ENCODE measurements at regions of chr16 and their contacts with region 1.

Region 1: GRCh38 chr16:13453938-13454553 is 465.9 kb upstream of the ERCC4 start:
- DNase-seq: peak; percentile 54
- H3K4me3 Mint-ChIP-seq: no peak overlapping the region
- H3K27ac Mint-ChIP-seq: no peak overlapping the region
- H3K4me1 Mint-ChIP-seq: no peaks in the 10 kb centered on the region
- H3K27me3 Mint-ChIP-seq: peaks cover 5% of the 10 kb centered on the region

Region 2: GRCh38 chr16:12228602-12229499 is 1225.2 kb before region 1 on chr16:
- CTCF ChIA-PET with region 1: no interaction called
- intact Hi-C with region 1: loop called (anchors 10 kb)
- DNase-seq: peak; percentile 56
- H3K4me3 Mint-ChIP-seq: no peak overlapping the region
- H3K27ac Mint-ChIP-seq: no peak overlapping the region
- H3K4me1 Mint-ChIP-seq: peaks cover 19% of the 10 kb centered on the region
- H3K27me3 Mint-ChIP-seq: no peaks in the 10 kb centered on the region

Region 3: DNA sequence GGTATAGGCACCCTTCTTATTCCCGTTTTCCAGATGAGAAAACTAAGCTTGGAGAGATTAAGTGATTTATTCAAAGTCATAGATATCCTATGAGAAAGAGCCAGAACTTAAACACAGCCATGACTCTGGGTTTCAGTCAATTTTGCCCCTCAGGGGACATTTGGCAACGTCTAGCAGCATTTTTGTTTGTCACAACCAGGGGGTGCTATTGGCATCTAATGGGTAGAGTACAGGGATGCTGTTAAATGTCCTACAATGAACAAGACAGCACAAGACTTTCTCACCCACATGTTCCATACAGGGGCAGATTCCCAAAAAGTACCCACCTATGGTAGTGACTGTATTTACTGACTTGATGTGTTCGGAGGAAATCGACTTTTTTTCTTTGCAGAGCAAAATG is 557.5 kb before region 1 on chr16:
- CTCF ChIA-PET with region 1: no interaction called
- intact Hi-C with region 1: loop called (anchors 5 kb)
- DNase-seq: no peak
- H3K4me3 Mint-ChIP-seq: no peak overlapping the region
- H3K27ac Mint-ChIP-seq: no peak overlapping the region
- H3K4me1 Mint-ChIP-seq: peaks cover 1% of the 10 kb centered on the region
- H3K27me3 Mint-ChIP-seq: peaks cover 38% of the 10 kb centered on the region

Region 4: GRCh38 chr16:13254998-13255614 is 198.9 kb before region 1 on chr16:
- CTCF ChIA-PET with region 1: no interaction called
- intact Hi-C with region 1: no loop called
- DNase-seq: no peak
- H3K4me3 Mint-ChIP-seq: no peak overlapping the region
- H3K27ac Mint-ChIP-seq: no peak overlapping the region
- H3K4me1 Mint-ChIP-seq: no peaks in the 10 kb centered on the region
- H3K27me3 Mint-ChIP-seq: no peaks in the 10 kb centered on the region